CD8-positive, alpha-beta T cell (primary cell): ENCODE measurements at regions of chr17 and their contacts with region 1.

Region 1: DNA sequence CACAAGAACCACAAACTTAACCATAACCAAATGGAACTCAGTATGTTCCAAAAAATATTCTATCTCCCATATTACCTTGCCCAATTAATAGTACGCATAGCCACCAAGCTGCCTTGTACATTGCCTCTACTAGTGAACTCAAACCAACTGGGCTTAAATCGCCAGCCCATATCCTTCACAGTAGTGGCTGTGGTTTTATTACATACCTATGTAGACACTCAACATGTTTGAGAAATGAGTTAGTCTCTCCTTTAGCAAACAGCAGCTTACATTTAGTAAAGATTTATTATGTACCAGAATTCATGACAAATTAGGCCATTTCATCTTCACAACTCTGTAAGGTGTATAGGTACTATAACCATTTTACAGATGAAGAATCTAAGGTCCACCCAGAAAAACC is 41.4 kb downstream of the GRB2 start:
- DNase-seq: no peak
- ATAC-seq: no peak
- H3K4me3 ChIP-seq: no peak overlapping the region
- H3K4me3 Mint-ChIP-seq: no peak overlapping the region
- H3K27ac ChIP-seq: no peak overlapping the region
- H3K27ac Mint-ChIP-seq: peak overlapping the region; percentile 8
- H3K4me1 ChIP-seq: peaks cover 89% of the 10 kb centered on the region
- H3K4me1 Mint-ChIP-seq: peaks cover 90% of the 10 kb centered on the region
- H3K27me3 ChIP-seq: no peaks in the 10 kb centered on the region
- H3K27me3 Mint-ChIP-seq: no peaks in the 10 kb centered on the region
- CTCF ChIP-seq: no peak

Region 2: GRCh38 chr17:75380315-75380714 is 16.2 kb after region 1 on chr17:
- CTCF ChIA-PET with region 1: interaction called, 7 read pairs
- POLR2A ChIA-PET with region 1: interaction called, 3 read pairs
- intact Hi-C with region 1: loop called in 1 of 2 experiments (anchors 2 kb)
- DNase-seq: no peak
- ATAC-seq: no peak
- H3K4me3 ChIP-seq: no peak overlapping the region
- H3K4me3 Mint-ChIP-seq: no peak overlapping the region
- H3K27ac ChIP-seq: no peak overlapping the region
- H3K27ac Mint-ChIP-seq: peak overlapping the region; percentile 28
- H3K4me1 ChIP-seq: peaks cover 19% of the 10 kb centered on the region
- H3K4me1 Mint-ChIP-seq: peaks cover 61% of the 10 kb centered on the region
- H3K27me3 ChIP-seq: no peaks in the 10 kb centered on the region
- H3K27me3 Mint-ChIP-seq: no peaks in the 10 kb centered on the region
- CTCF ChIP-seq: no peak

Region 3: GRCh38 chr17:76515274-76515949 is 1151.3 kb after region 1 on chr17:
- CTCF ChIA-PET with region 1: no interaction called
- POLR2A ChIA-PET with region 1: no interaction called
- intact Hi-C with region 1: no loop called
- DNase-seq: peak; percentile 72 to 99 (median 84)
- ATAC-seq: peak; percentile 82
- H3K4me3 ChIP-seq: peak overlapping the region; percentile 32 to 44
- H3K4me3 Mint-ChIP-seq: peak overlapping the region; percentile 67
- H3K27ac ChIP-seq: peak overlapping the region; percentile 85 to 92
- H3K27ac Mint-ChIP-seq: peak overlapping the region; percentile 97
- H3K4me1 ChIP-seq: peaks cover 43% of the 10 kb centered on the region
- H3K4me1 Mint-ChIP-seq: peaks cover 49% of the 10 kb centered on the region
- H3K27me3 ChIP-seq: no peaks in the 10 kb centered on the region
- H3K27me3 Mint-ChIP-seq: no peaks in the 10 kb centered on the region
- CTCF ChIP-seq: no peak